Gastrocnemius medialis (tissue), 4 donors: ENCODE measurements at regions of chr9 and their contacts with region 1.

Region 1: GRCh38 chr9:127396808-127397497 is at the start of gene SLC2A8:
- DNase-seq: peak; percentile 99 to 100
- ATAC-seq: peak; percentile 94 to 97
- H3K4me3 ChIP-seq: peak within 1 kb of the TSS; percentile 75 to 95 (median 81)
- H3K27ac ChIP-seq: peak within 1 kb of the TSS; percentile 81 to 95 (median 91)
- H3K4me1 ChIP-seq: peaks cover 17 to 19% of the 10 kb centered on the region in 2 donors
- H3K27me3 ChIP-seq: no peaks in the 10 kb centered on the region
- CTCF ChIP-seq: peak in 3 of 5 experiments; percentile 29 to 52 (median 31)
- POLR2A ChIP-seq: peak; percentile 84 to 86
- total RNA-seq, gene SLC2A8: 19.8 to 31.2 (median 25.7) TPM

Region 2: DNA sequence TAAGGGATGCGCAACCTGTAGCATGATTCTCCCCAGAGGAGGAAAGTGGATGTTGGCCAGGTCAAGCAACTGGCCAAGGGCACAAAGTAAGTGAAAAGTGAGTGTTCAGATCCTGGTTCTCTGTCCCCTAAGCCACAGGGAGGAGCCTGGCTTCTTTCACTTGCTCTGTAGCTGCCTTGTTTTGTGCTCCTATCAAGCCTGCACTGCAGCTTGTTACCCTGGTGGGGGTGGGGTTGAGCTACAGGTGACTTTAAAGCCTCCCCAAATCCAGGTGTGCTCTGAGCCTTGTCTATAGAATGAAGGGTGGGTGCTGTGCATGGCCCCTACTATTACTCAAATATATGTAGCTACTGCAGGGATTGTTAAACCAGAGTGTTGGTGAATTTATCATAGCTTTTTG is 449.4 kb before region 1 on chr9:
- in situ Hi-C with region 1: loop called in 2 of 4 experiments (anchors 25 kb)
- intact Hi-C with region 1: no loop called
- DNase-seq: no peak
- ATAC-seq: no peak
- H3K4me3 ChIP-seq: no peak overlapping the region
- H3K27ac ChIP-seq: no peak overlapping the region
- H3K4me1 ChIP-seq: peaks cover 0 to 4% of the 10 kb centered on the region in 2 donors
- H3K27me3 ChIP-seq: no peaks in the 10 kb centered on the region
- CTCF ChIP-seq: no peak
- POLR2A ChIP-seq: no peak

Region 3: DNA sequence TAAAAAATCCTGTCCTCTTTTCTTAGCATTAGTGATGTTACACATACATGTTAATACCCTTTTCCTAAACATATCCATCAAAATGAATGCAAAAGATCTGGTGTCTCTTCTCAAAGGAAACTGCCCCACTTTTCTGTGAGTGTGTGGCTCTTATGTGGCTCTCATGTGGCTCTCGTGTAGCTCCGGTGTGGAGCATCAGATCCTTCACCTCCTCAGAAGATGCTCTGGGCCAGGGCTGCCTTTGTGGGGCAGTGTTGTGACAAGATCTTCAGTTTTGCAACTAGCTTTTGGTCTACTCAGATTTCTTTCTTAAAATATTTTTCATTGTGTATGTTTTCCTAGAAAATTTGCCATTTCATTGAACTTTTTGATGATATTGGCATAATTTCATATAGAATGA is 113.0 kb before region 1 on chr9:
- in situ Hi-C with region 1: no loop called
- intact Hi-C with region 1: loop called (anchors 1 kb)
- DNase-seq: peak; percentile 31 to 47
- ATAC-seq: peak; percentile 51 to 74
- H3K4me3 ChIP-seq: no peak overlapping the region
- H3K27ac ChIP-seq: no peak overlapping the region
- H3K4me1 ChIP-seq: no peaks in the 10 kb centered on the region
- H3K27me3 ChIP-seq: no peaks in the 10 kb centered on the region
- CTCF ChIP-seq: peak in 2 of 5 experiments; percentile 42 to 43
- POLR2A ChIP-seq: no peak

Region 4: DNA sequence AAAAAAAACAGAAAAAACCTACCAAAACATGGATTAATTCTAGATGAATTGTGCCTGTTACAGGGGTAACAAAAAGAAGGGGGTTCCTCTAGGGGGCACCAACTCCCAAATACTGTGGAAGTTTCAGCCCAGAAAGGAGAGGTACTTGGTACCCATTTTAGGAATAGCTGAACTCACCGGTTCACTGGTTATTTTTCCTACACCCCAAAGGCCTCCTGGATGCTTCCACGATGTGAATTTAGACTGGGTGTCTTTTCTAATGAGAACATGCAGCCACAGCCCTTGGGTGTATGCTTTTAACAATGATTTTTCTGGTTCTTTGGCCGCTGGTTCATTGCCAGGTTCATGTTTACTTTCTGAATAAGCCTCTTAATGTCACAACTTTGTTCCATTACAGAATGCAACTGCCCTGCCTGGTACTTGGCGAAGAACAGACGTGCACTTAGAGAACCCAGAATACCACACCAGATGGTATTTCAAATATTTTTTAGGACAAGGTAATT is 85.7 kb before region 1 on chr9:
- in situ Hi-C with region 1: no loop called
- intact Hi-C with region 1: loop called (anchors 2 kb)
- DNase-seq: peak in 1 of 2 donors; percentile 42
- ATAC-seq: peak; percentile 46 to 49
- H3K4me3 ChIP-seq: no peak overlapping the region
- H3K27ac ChIP-seq: peak overlapping the region; percentile 40 to 79 (median 63)
- H3K4me1 ChIP-seq: peaks cover 39 to 42% of the 10 kb centered on the region in 2 donors
- H3K27me3 ChIP-seq: no peaks in the 10 kb centered on the region
- CTCF ChIP-seq: peak in 3 of 5 experiments; percentile 30 to 63 (median 49)
- POLR2A ChIP-seq: no peak

Region 5: DNA sequence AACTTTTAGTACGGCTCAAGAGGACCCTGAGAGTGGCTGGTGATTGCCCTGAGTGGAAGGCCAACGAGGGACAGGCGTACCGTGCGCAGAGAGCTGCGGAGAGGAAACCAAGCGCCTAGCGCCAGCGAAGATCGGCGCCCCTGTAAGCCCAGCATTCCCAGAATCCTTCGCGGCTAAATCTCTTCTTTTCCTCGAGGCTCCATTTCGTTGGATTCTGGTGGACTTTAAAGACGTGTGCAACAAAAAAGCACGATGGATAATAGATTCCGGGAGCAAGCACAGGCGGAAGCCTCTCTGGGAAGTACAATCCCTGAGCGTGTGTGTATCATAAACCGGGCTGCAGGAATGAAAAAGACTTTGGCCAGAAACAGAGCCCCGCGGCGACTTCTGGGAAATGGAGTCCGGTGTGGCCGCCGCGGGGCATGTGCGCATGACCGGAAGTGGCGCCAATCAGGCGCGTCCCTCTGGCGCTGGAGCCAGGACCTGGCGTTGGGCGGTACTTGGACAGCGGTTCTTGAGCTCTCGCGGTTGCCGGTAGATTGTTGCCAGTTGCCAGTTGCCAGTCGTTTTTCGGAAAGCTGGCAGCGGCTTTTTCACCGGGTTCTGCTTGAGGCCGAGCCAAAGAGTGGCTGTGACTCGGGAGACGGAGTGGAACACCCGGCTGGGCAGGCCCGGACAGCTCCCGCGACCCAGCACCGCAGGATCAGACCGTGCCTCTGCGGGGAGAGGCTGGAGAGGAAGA is 27.2 kb after region 1 on chr9 and contains the start of gene ZNF79:
- in situ Hi-C with region 1: no loop called
- intact Hi-C with region 1: loop called (anchors 1 kb)
- DNase-seq: peak; percentile 85 to 93
- ATAC-seq: peak; percentile 92 to 94
- H3K4me3 ChIP-seq: peak within 1 kb of the TSS; percentile 84 to 98 (median 92)
- H3K27ac ChIP-seq: peak within 1 kb of the TSS; percentile 91 to 97 (median 95)
- H3K4me1 ChIP-seq: peaks cover 34 to 36% of the 10 kb centered on the region in 2 donors
- H3K27me3 ChIP-seq: no peaks in the 10 kb centered on the region
- CTCF ChIP-seq: no peak
- POLR2A ChIP-seq: peak; percentile 71 to 79
- total RNA-seq, gene ZNF79: 3.9 to 9.3 (median 6.4) TPM

Region 6: GRCh38 chr9:127450830-127451724 is 54.1 kb after region 1 on chr9 and contains the starts of genes LRSAM1 and RPL12:
- in situ Hi-C with region 1: no loop called
- intact Hi-C with region 1: loop called (anchors 1 kb)
- DNase-seq: peak; percentile 94
- ATAC-seq: peak; percentile 86
- H3K4me3 ChIP-seq: peak within 1 kb of the TSS; percentile 76 to 97 (median 88)
- H3K27ac ChIP-seq: peak within 1 kb of the TSS; percentile 93 to 97 (median 94)
- H3K4me1 ChIP-seq: peaks cover 37 to 48% of the 10 kb centered on the region in 2 donors
- H3K27me3 ChIP-seq: no peaks in the 10 kb centered on the region
- CTCF ChIP-seq: no peak
- POLR2A ChIP-seq: peak; percentile 99 to 100
- total RNA-seq, gene LRSAM1: 10.2 to 17.3 (median 16.1) TPM
- total RNA-seq, gene RPL12: 1,654 to 2,251 (median 1,749) TPM

Region 7: GRCh38 chr9:127715394-127716337 is 318.7 kb after region 1 on chr9 and contains the starts of genes PTRH1 and TTC16:
- in situ Hi-C with region 1: no loop called
- intact Hi-C with region 1: no loop called
- DNase-seq: peak; percentile 95 to 96
- ATAC-seq: peak; percentile 94 to 96
- H3K4me3 ChIP-seq: peak within 1 kb of the TSS; percentile 74 to 85 (median 78)
- H3K27ac ChIP-seq: peak within 1 kb of the TSS; percentile 84 to 86 (median 84)
- H3K4me1 ChIP-seq: peaks cover 12 to 14% of the 10 kb centered on the region in 2 donors
- H3K27me3 ChIP-seq: no peaks in the 10 kb centered on the region
- CTCF ChIP-seq: no peak
- POLR2A ChIP-seq: peak; percentile 71 to 78
- total RNA-seq, gene PTRH1: 16.9 to 38.6 (median 26.3) TPM
- total RNA-seq, gene TTC16: not detected